Mammary epithelial cell (primary cell): ENCODE measurements at regions of chr20 and their contacts with region 1.

Region 1: DNA sequence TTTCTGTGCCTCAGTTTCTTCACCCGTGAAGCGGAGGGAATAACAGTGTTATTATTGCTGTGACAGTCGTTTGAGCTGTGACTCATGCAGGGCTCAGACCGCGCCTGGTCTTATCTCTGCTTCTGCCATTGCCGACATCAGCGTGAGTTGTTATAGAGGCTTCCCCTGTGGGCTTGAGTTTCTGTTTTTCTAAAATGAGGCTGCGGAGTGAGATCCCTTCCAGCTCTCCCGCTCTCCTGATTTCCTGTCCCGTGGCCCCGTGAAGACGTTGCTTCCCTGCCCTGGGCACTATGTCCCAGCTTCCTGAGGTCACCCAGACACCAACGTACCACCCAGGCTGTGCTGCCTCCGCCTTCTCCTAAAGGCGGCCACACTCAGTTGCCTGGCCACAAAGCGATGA is 278.5 kb downstream of the BMP7 start:
- DNase-seq: peak; percentile 35
- H3K4me3 ChIP-seq: no peak overlapping the region
- H3K27ac ChIP-seq: no peak overlapping the region
- H3K4me1 ChIP-seq: no peaks in the 10 kb centered on the region
- H3K27me3 ChIP-seq: no peaks in the 10 kb centered on the region
- CTCF ChIP-seq: no peak

Region 2: GRCh38 chr20:56653221-56653620 is 334.8 kb before region 1 on chr20:
- CTCF ChIA-PET with region 1: no interaction called
- dilution Hi-C with region 1: loop called (anchors 5 kb)
- in situ Hi-C with region 1: no loop called
- intact Hi-C with region 1: no loop called
- DNase-seq: peak; percentile 26
- H3K4me3 ChIP-seq: no peak overlapping the region
- H3K27ac ChIP-seq: no peak overlapping the region
- H3K4me1 ChIP-seq: no peaks in the 10 kb centered on the region
- H3K27me3 ChIP-seq: no peaks in the 10 kb centered on the region
- CTCF ChIP-seq: no peak

Region 3: GRCh38 chr20:56843817-56844216 is 144.2 kb before region 1 on chr20:
- CTCF ChIA-PET with region 1: no interaction called
- dilution Hi-C with region 1: no loop called
- in situ Hi-C with region 1: no loop called
- intact Hi-C with region 1: no loop called
- DNase-seq: no peak
- H3K4me3 ChIP-seq: no peak overlapping the region
- H3K27ac ChIP-seq: no peak overlapping the region
- H3K4me1 ChIP-seq: no peaks in the 10 kb centered on the region
- H3K27me3 ChIP-seq: no peaks in the 10 kb centered on the region
- CTCF ChIP-seq: peak; percentile 16 to 29

Region 4: GRCh38 chr20:57048027-57048869 is 60.3 kb after region 1 on chr20:
- CTCF ChIA-PET with region 1: no interaction called
- dilution Hi-C with region 1: no loop called
- in situ Hi-C with region 1: no loop called
- intact Hi-C with region 1: loop called (anchors 5 kb)
- DNase-seq: peak; percentile 37
- H3K4me3 ChIP-seq: no peak overlapping the region
- H3K27ac ChIP-seq: no peak overlapping the region
- H3K4me1 ChIP-seq: peaks cover 19% of the 10 kb centered on the region
- H3K27me3 ChIP-seq: no peaks in the 10 kb centered on the region
- CTCF ChIP-seq: peak; percentile 76 to 78